Endothelial cell of umbilical vein (primary cell): ENCODE measurements at regions of chr1 and their contacts with region 1.

Region 1: DNA sequence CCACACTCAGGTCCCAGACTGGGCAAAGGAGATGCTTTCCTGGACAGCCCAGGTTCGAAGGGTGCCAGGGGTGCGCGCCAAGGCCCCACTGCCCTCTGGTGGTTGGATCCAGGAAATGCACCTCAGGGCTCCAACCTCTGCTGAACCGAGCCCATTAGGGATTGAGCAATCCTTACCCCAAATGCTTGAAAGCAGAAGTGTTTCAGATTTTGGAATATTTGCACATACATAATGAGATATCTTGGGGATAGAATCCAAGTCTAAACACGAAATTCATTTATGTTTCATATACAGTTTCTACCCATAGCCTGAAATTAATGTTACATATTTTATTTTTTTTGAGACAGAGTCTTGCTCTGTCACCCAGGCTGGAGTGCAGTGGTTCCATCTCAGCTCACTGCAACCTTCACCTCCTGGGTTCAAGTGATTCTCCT is 57.4 kb downstream of the SLC9A1 start:
- DNase-seq: peak; percentile 64
- H3K4me3 ChIP-seq: no peak overlapping the region
- H3K27ac ChIP-seq: no peak overlapping the region
- H3K4me1 ChIP-seq: no peaks in the 10 kb centered on the region
- H3K27me3 ChIP-seq: no peaks in the 10 kb centered on the region
- CTCF ChIP-seq: peak; percentile 89 to 91
- POLR2A ChIP-seq: no peak

Region 2: DNA sequence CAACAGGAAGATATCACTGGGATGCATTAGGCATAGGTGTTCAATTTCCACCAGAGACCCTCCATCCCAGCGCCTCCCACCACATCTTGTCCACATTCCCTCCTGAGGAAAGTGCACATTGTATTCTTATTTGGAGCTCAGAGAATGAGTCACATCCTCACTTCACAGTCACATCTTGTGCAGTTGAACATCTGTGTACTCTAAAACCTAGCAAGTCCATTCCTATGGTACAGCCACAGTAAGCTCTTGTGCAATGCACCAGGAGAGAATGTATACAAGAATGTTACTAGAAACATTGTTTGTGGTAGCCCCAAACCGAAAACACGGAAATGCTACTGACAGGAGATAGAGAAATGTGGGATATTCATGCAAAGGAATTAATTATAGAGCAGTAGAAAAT is 135.7 kb before region 1 on chr1:
- CTCF ChIA-PET with region 1: interaction called, 40 read pairs
- POLR2A ChIA-PET with region 1: no interaction called
- dilution Hi-C with region 1: no loop called
- intact Hi-C with region 1: loop called (anchors 1 kb)
- DNase-seq: peak; percentile 70
- H3K4me3 ChIP-seq: no peak overlapping the region
- H3K27ac ChIP-seq: no peak overlapping the region
- H3K4me1 ChIP-seq: peaks cover 16% of the 10 kb centered on the region
- H3K27me3 ChIP-seq: peaks cover 22 to 24% of the 10 kb centered on the region in 2 experiments
- CTCF ChIP-seq: no peak
- POLR2A ChIP-seq: no peak

Region 3: GRCh38 chr1:27037515-27037914 is 60.0 kb before region 1 on chr1:
- CTCF ChIA-PET with region 1: interaction called, 582 read pairs
- POLR2A ChIA-PET with region 1: no interaction called
- dilution Hi-C with region 1: no loop called
- intact Hi-C with region 1: no loop called
- DNase-seq: no peak
- H3K4me3 ChIP-seq: no peak overlapping the region
- H3K27ac ChIP-seq: no peak overlapping the region
- H3K4me1 ChIP-seq: peaks cover 14% of the 10 kb centered on the region
- H3K27me3 ChIP-seq: no peaks in the 10 kb centered on the region
- CTCF ChIP-seq: no peak
- POLR2A ChIP-seq: no peak

Region 4: DNA sequence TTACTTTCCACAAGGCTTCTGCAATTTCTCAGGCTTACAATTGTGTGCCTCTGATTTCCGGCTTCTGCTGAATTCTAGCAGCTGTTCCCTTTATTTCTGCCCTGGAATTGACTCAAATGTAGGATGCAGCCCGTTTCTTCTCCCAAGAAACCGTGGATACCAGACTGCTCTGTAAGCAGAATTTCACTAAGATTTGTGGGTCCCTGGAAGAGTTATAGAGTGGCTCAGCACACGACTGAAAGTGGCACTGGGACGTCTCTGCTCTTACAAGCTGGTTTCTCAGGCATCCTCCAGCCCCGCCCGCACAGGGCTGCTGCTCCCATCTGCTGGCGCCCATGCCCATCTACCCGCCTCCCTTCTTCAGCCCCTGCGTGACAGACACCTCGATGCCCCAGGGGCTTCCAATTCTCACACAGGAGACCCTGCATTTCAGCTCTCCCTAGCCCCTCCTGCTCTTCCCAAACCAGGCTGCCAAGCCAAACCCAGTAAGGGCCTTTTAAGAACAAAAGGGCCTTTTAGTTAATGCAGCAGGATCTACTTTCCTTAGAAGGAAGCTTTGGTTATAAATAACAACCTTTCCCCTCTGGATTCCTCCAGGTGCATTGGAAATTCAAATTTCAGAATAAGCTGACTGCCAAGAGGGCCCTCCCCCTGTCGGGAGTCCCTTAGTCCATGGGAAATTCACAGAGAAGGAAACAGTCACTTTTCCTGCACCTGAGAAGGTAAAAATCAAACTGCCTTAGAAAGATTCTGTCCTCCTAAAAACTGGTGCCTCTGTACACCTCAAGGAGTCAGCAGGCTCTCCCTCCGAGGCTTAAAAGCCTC is 39.5 kb before region 1 on chr1:
- CTCF ChIA-PET with region 1: interaction called, 16 read pairs
- POLR2A ChIA-PET with region 1: no interaction called
- dilution Hi-C with region 1: no loop called
- intact Hi-C with region 1: no loop called
- DNase-seq: no peak
- H3K4me3 ChIP-seq: no peak overlapping the region
- H3K27ac ChIP-seq: no peak overlapping the region
- H3K4me1 ChIP-seq: no peaks in the 10 kb centered on the region
- H3K27me3 ChIP-seq: peaks cover 6 to 10% of the 10 kb centered on the region in 2 experiments
- CTCF ChIP-seq: no peak
- POLR2A ChIP-seq: no peak

Region 5: GRCh38 chr1:27179379-27179778 is 81.9 kb after region 1 on chr1:
- CTCF ChIA-PET with region 1: no interaction called
- POLR2A ChIA-PET with region 1: no interaction called
- dilution Hi-C with region 1: no loop called
- intact Hi-C with region 1: no loop called
- DNase-seq: no peak
- H3K4me3 ChIP-seq: no peak overlapping the region
- H3K27ac ChIP-seq: no peak overlapping the region
- H3K4me1 ChIP-seq: no peaks in the 10 kb centered on the region
- H3K27me3 ChIP-seq: no peaks in the 10 kb centered on the region
- CTCF ChIP-seq: no peak
- POLR2A ChIP-seq: no peak

Region 6: GRCh38 chr1:27402349-27402754 is 304.9 kb after region 1 on chr1:
- CTCF ChIA-PET with region 1: no interaction called
- POLR2A ChIA-PET with region 1: no interaction called
- dilution Hi-C with region 1: no loop called
- intact Hi-C with region 1: no loop called
- DNase-seq: peak; percentile 74
- H3K4me3 ChIP-seq: no peak overlapping the region
- H3K27ac ChIP-seq: no peak overlapping the region
- H3K4me1 ChIP-seq: peaks cover 4% of the 10 kb centered on the region
- H3K27me3 ChIP-seq: no peaks in the 10 kb centered on the region
- CTCF ChIP-seq: peak; percentile 57 to 81
- POLR2A ChIP-seq: no peak